ENCODE measurements at regions of chr1 and their contacts with region 1.

Region 1: DNA sequence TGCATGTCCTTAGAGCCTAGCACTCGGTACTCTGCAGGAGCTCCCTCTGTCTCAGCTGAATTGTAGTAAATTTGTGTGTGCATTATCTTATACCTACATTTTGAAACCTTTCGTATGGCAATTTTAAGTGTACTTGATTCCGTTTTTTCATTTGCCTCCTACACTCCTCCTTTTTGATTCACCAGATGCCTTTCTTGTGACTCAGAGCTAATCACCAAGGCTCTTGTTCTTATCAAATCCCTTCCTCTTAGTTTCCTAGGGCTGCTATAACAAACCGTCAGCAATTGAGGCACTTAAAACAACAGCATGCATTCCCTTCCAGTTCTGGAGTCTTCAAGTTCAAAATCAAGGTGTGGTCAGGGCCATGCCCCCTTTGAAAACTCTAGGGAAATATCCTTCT is 261.0 kb downstream of the ASTN1 start:
- DNase-seq: no peak
- ATAC-seq: no peak
- H3K4me3 ChIP-seq: no peak overlapping the region
- H3K27ac ChIP-seq: no peak overlapping the region
- H3K4me1 ChIP-seq: no peaks in the 10 kb centered on the region
- H3K27me3 ChIP-seq: peaks cover 7 to 29% (median 16%) of the 10 kb centered on the region in 3 donors
- CTCF ChIP-seq: no peak
- POLR2A ChIP-seq: no peak

Region 2: DNA sequence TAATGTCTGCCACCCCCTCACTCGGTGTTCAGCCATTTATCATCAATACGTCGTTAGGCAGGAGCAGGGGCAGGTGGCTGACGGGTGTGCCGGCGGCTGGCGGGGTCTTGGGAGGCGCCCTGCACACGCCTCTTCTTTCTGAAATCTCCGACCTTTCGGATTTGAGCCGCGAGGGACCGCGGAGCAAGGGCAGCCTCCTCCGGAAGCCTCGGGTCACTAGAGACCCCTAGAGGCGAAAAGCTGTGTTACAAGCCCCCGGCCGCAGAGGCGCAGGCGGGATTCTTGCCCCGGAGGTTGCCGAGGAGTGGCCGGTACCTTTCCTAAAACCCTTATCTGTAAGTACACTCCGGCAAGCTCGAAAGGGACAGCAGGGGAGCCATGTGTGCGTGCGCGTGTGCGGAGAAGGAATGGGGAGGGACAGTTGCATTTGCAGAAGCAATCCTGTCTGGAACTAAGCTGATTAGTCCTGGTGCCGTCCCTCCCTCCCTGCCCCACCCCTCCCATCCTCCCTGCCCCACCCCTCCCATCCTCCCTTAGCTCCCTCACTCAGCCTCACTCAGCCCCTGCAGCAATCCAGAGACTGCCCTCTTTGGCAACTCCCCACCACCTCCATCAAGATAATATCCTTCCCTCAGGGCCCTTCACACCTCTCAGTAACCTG is 278.3 kb after region 1 on chr1:
- in situ Hi-C with region 1: loop called in 3 of 4 experiments (anchors 5 to 25 kb)
- intact Hi-C with region 1: loop called (anchors 5 kb)
- DNase-seq: peak in 1 of 2 donors; percentile 18
- ATAC-seq: peak; percentile 74 to 75
- H3K4me3 ChIP-seq: peak overlapping the region; percentile 14 to 42 (median 29)
- H3K27ac ChIP-seq: no peak overlapping the region
- H3K4me1 ChIP-seq: no peaks in the 10 kb centered on the region
- H3K27me3 ChIP-seq: peaks cover 0 to 13% (median 5%) of the 10 kb centered on the region in 3 donors
- CTCF ChIP-seq: peak; percentile 31 to 82 (median 68)
- POLR2A ChIP-seq: no peak